Ascending aorta (tissue), 2 donors: ENCODE measurements at regions of chr6 and their contacts with region 1.

Region 1: DNA sequence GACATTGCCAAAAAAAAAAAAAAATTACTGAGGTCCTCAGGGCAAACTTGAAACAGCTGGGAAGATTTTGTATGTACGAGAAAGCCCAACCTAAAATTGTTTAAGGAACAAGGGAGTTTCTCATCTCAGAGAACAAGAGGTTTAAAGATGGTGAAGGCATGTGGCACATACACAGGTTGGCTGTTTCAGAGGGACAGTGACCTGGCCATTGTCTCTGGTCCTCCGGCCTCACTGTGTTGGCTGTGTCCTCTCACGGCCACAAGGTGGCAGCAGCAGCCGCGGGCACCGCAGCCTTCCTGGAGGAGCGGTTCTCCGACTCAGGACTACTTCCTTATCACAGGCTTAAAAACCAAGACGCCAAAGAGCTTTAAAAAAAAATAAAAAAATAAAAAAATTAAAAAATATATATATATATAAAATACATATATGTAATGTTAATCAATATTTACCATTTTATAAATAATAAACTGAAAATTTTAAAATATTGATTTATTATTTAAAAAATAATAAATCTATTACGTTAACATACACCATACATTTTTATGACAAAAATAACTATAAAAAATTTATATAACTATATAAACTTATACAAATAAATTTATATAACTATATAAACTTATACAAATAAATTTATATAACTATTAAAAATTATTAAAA is 52.8 kb downstream of the GTF2H5 start:
- DNase-seq: peak; percentile 36 to 86
- H3K4me3 ChIP-seq: no peak overlapping the region
- H3K27ac ChIP-seq: no peak overlapping the region
- H3K4me1 ChIP-seq: no peaks in the 10 kb centered on the region
- H3K27me3 ChIP-seq: no peaks in the 10 kb centered on the region
- CTCF ChIP-seq: peak; percentile 81 to 97 (median 96)

Region 2: DNA sequence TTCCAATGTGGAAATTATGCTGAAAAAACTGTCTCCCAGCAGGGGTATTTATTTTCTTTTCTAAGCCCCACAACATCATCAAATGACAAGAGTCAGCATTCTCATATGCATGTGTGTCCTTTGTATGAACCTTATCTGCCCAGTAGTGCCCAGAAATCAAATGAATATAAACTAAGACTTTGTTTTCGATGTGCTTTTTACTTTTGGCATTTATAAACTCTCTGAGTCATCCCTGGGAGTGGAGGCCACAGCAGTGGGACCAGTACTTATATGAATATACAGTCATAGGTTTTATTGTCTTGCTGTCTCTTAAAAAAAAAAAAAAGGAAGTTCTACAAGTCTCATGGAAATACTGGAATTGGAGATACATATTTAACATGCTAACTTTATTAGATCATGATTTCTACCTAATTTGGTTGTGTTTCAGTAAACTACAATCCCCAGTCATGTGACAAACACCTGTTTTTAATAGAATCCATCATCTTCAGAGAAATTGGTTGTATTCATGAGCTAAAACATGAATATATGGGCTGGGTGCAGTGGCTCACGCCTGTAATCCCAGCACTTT is 239.8 kb after region 1 on chr6:
- intact Hi-C with region 1: loop called (anchors 10 kb)
- DNase-seq: no peak
- H3K4me3 ChIP-seq: no peak overlapping the region
- H3K27ac ChIP-seq: no peak overlapping the region
- H3K4me1 ChIP-seq: no peaks in the 10 kb centered on the region
- H3K27me3 ChIP-seq: no peaks in the 10 kb centered on the region
- CTCF ChIP-seq: no peak

Region 3: DNA sequence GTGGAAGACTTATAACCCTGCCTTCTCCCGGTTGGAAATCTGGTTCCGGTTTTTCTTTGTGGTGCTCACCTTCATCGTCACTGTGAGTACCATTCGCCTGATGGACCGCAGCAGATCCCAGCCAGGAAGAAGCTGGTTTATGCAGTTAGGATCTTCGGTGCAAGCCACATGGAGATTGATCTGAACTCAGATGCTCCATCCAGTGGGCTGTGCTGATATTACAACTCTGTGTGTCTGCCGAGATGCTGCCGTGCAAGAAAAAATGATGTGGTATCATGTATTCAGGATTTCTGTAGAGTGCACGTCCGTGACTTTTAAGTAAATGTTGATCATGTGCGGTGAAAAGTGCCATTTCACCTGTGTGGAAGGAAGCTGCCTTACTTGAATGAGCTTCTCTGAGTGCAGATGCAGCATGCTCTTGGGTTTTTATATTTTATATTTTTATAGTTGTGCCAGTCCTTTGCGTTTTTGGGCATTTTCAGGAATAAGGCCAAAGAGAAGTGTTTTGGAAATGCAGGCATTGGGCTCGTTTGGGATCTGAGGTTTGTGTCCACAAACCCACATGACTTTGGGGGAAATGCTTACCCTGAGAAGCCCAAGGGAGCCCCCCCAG is 384.5 kb after region 1 on chr6:
- intact Hi-C with region 1: loop called (anchors 2 kb)
- DNase-seq: no peak
- H3K4me3 ChIP-seq: no peak overlapping the region
- H3K27ac ChIP-seq: no peak overlapping the region
- H3K4me1 ChIP-seq: peaks cover 0 to 3% of the 10 kb centered on the region in 2 donors
- H3K27me3 ChIP-seq: no peaks in the 10 kb centered on the region
- CTCF ChIP-seq: peak; percentile 40 to 72 (median 71)

Region 4: DNA sequence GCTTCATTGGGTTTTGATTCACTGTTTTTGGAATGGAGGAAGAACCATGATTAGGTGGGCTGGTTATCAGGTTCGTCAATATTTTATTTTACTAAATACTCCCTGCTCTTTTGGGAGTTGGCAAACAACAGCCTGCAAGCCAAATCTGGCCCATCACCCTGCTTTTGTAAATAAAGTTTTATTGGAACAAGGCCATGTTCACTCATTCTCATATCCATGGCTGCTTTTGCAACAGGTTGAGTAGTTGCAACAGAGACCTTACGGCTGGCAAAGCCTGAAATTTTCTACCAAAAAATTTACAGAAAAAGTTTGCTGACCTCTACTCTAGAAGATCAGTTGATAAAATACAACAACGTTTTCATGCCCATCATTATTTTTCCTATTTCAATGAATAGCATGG is 474.0 kb after region 1 on chr6:
- intact Hi-C with region 1: loop called (anchors 5 kb)
- DNase-seq: no peak
- H3K4me3 ChIP-seq: no peak overlapping the region
- H3K27ac ChIP-seq: no peak overlapping the region
- H3K4me1 ChIP-seq: no peaks in the 10 kb centered on the region
- H3K27me3 ChIP-seq: no peaks in the 10 kb centered on the region
- CTCF ChIP-seq: no peak